Activated CD8-positive, alpha-beta T cell treated with anti-CD3 and anti-CD28 coated beads, Interleukin-2, amount 10 ng/mL, durations not matched to agents 7 days and 5 days (primary cell): ENCODE measurements at regions of chr1 and their contacts with region 1.

Region 1: GRCh38 chr1:208245185-208245705 is 1.1 kb upstream of the PLXNA2 start:
- DNase-seq: peak; percentile 89
- ATAC-seq: peak; percentile 70
- H3K4me3 Mint-ChIP-seq: peak overlapping the region; percentile 75
- H3K27ac Mint-ChIP-seq: no peak overlapping the region
- H3K4me1 Mint-ChIP-seq: peaks cover 15% of the 10 kb centered on the region
- H3K27me3 Mint-ChIP-seq: peaks cover 49% of the 10 kb centered on the region

Region 2: DNA sequence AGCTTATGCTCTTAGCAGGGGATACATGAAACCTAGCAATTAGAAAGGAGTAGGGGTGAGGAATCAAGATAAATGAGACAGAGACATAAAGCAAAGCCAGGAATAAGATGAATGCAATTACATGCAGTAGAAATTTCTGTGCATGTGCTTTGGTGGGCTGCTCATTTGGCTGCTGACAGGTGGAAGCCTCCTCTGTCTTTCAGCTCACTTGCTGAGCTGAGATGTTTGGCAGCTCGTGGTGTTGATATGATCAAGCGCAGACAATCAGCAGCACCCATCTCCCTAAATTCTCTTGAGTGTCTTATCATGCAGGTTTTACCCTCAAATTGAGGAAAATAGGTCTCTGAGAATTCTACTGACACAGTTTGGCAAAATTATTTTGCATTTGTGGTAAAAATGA is 226.0 kb before region 1 on chr1:
- CTCF ChIA-PET with region 1: interaction called, 87 read pairs
- POLR2A ChIA-PET with region 1: no interaction called
- DNase-seq: no peak
- ATAC-seq: no peak
- H3K4me3 Mint-ChIP-seq: no peak overlapping the region
- H3K27ac Mint-ChIP-seq: no peak overlapping the region
- H3K4me1 Mint-ChIP-seq: no peaks in the 10 kb centered on the region
- H3K27me3 Mint-ChIP-seq: peaks cover 9% of the 10 kb centered on the region

Region 3: DNA sequence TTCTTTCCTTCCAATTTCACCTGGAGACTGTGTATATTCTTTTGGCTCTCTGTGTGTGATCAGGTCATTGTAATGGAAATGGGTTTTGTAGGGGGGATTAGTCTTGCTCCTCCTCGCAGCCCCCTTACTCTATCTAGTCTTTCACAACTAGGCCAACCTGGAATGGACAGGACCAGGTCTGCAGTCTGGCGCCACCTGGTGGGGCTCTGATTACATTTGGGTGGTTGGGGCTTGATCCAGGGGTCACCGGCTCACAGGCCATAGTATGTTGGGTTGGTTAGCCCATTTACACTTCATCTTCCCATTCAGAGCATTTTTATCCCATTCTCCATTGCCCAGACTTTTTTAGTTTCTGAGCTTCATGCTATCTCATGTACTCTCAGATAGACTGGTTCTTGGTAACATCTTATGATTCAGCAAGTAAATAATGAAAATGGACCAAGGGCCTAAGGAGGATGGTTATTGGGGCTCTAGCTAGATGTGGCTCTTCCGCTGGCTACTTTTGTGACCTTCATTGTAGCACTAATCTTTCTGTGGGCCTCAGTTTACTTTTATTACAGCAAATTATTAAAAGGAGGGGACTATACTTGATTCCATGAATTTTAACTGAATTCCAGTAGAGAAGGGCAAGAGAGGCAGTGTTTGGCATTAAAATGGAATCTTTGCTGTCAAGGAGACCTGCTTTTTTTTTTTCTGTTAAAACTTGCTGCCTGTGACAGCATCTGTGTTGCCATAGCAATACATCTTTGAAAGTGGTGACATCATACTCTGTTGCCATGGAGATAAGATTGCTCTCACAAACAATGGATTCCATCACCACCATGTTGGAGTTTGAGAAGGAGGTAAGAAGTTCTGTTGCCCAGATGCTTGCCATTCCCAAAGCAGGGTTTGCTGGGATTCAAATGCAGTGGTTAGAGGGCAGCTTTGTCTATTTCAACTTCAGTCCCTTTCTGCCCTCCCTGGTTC is 151.2 kb before region 1 on chr1:
- CTCF ChIA-PET with region 1: interaction called, 19 read pairs
- POLR2A ChIA-PET with region 1: no interaction called
- DNase-seq: peak; percentile 75
- ATAC-seq: peak; percentile 70
- H3K4me3 Mint-ChIP-seq: no peak overlapping the region
- H3K27ac Mint-ChIP-seq: no peak overlapping the region
- H3K4me1 Mint-ChIP-seq: no peaks in the 10 kb centered on the region
- H3K27me3 Mint-ChIP-seq: no peaks in the 10 kb centered on the region

Region 4: DNA sequence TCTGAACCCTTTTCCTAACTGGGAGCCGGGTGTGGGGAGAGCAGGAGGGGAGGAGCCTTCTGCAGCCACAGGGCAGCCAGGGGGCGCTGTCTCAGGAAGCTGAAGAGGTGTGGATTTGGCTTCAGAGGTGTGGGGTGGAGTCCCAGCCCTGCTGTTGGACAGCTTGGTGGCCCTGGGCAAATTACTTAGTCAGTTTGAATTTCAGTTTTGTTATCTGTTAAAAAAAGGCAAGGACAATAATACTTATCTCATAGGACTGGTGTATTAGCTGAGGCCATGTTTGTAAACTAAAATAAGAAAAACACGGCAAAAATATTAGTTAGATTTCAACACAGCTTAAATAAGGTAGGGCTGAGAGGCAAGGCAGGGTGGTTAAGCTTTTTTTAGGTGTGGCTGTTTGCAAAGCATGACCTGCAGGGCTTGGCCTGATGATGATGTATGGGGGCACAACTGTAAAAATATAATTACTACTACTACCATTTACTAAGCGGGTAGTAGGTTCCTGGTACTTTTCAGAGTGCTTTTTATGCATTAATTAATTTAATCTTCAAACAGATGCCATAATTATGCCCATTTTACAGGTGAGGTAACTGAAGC is 112.9 kb before region 1 on chr1:
- CTCF ChIA-PET with region 1: interaction called, 58 read pairs
- POLR2A ChIA-PET with region 1: no interaction called
- DNase-seq: peak; percentile 70
- ATAC-seq: peak; percentile 89
- H3K4me3 Mint-ChIP-seq: no peak overlapping the region
- H3K27ac Mint-ChIP-seq: no peak overlapping the region
- H3K4me1 Mint-ChIP-seq: peaks cover 5% of the 10 kb centered on the region
- H3K27me3 Mint-ChIP-seq: peaks cover 13% of the 10 kb centered on the region

Region 5: GRCh38 chr1:208298593-208299269 is 53.5 kb after region 1 on chr1:
- CTCF ChIA-PET with region 1: no interaction called
- POLR2A ChIA-PET with region 1: no interaction called
- DNase-seq: no peak
- ATAC-seq: no peak
- H3K4me3 Mint-ChIP-seq: no peak overlapping the region
- H3K27ac Mint-ChIP-seq: no peak overlapping the region
- H3K4me1 Mint-ChIP-seq: no peaks in the 10 kb centered on the region
- H3K27me3 Mint-ChIP-seq: peaks cover 16% of the 10 kb centered on the region